G401 (cell line): ENCODE measurements at regions of chr2 and their contacts with region 1.

Region 1: DNA sequence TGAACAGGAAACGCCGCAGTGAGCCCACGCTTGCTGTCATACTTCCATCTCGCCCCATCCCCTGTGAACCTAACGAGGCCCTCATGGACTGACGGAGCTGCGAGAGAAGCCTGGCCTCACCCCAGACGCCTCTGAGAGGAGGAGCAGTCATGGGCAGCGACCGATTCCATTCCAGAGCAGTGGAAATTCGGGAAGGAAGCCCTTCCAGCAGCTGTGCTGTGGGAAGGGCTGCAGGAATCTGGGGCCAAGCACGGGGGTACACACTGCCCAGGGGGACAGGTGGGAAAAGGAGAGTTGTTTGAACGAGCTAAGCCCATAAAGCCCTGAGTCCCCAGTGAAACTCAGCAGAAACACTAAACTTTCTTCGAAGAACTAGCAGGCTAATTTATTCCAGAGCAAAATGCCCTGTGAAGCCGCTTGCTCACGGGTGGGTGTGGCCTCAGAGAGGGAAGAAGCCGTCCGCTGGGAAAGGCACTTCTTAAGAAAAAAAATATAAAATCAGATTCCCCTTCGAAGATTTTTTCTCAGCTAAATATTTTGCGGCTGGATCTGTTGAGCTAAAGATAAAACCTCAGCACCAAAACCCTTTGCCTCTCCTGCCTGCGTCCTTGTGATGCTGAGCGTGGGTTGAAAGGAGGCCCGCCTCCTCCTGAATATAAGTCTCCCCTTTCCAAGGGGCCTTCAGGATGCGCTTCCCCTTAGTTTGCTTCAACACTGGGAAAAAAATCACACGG is 38.2 kb downstream of the ANKMY1 start:
- DNase-seq: no peak

Region 2: DNA sequence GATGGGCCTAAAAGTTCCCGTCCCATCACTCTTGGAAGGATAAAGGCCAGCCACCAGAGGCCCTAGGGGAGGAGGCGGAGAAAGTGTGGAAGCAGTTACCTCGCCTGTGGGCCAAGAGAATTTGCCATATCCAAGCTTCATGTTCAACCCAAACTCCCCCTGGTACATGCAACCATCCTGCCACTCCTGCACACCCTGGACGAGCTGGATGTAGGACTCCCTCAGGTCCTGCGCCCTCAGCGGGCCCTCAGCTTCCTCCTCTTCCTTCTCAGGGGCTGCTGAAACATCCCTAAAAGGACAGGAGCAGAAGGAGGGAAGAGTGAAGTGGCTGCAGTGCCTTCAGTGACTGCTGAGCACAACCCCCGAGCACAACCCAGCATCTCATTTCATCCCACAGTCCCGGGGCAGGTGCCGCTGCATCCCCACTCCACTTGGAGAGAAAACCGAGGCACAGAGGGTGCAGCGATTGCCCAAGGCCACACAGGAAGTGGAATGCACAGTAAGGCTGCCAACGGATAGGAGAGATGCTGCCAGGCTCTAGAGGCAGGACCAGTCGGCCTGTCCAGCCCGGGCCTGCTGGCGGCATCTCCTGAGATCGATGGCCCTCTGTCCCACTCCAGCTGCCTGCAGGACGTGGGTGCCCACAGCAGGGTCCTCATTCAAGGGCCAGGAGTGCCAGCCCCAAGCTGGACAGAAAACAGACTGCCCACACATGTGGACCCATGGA is 35.4 kb after region 1 on chr2:
- in situ Hi-C with region 1: loop called (anchors 5 kb)
- DNase-seq: no peak